Aorta (tissue), 5 donors: ENCODE measurements at regions of chr9 and their contacts with region 1.

Region 1: GRCh38 chr9:7982907-7983306 is 183.3 kb upstream of the DMAC1 start:
- DNase-seq: no peak
- ATAC-seq: no peak
- H3K4me3 ChIP-seq: no peak overlapping the region
- H3K27ac ChIP-seq: no peak overlapping the region
- H3K4me1 ChIP-seq: no peaks in the 10 kb centered on the region
- H3K27me3 ChIP-seq: no peaks in the 10 kb centered on the region

Region 2: GRCh38 chr9:7921545-7922197 is 61.2 kb before region 1 on chr9:
- intact Hi-C with region 1: loop called in 1 of 2 experiments (anchors 10 kb)
- DNase-seq: no peak
- ATAC-seq: no peak
- H3K4me3 ChIP-seq: no peak overlapping the region
- H3K27ac ChIP-seq: no peak overlapping the region
- H3K4me1 ChIP-seq: peaks cover 0 to 3% of the 10 kb centered on the region in 2 donors
- H3K27me3 ChIP-seq: no peaks in the 10 kb centered on the region